ENCODE measurements at regions of chr1 and their contacts with region 1.

Region 1: GRCh38 chr1:204398217-204399081 is 13.2 kb downstream of the PPP1R15B start:
- DNase-seq: peak; percentile 82
- ATAC-seq: peak; percentile 99
- H3K4me3 ChIP-seq: no peak overlapping the region
- H3K27ac ChIP-seq: no peak overlapping the region; the same call in 1 of the 2 replicates
- H3K4me1 ChIP-seq: peaks cover 0 to 6% of the 10 kb centered on the region in 2 experiments; a peak in 2 of 4 replicates
- H3K27me3 ChIP-seq: no peaks in the 10 kb centered on the region
- CTCF ChIP-seq: peak; percentile 86 to 93 (median 87)
- POLR2A ChIP-seq: no peak
- RAD21 ChIP-seq: peak; percentile 81

Region 2: GRCh38 chr1:204162231-204163074 is 236.0 kb before region 1 on chr1:
- CTCF ChIA-PET with region 1: interaction called, 31 read pairs
- POLR2A ChIA-PET with region 1: no interaction called
- RAD21 ChIA-PET with region 1: interaction called, 3 to 5 read pairs
- intact Hi-C with region 1: loop called (anchors 1 kb)
- DNase-seq: peak; percentile 70
- ATAC-seq: peak; percentile 98
- H3K4me3 ChIP-seq: no peak overlapping the region
- H3K27ac ChIP-seq: no peak overlapping the region
- H3K4me1 ChIP-seq: peaks cover 0 to 15% of the 10 kb centered on the region in 2 experiments; a peak in 2 of 4 replicates
- H3K27me3 ChIP-seq: no peaks in the 10 kb centered on the region
- CTCF ChIP-seq: peak; percentile 98 to 99 (median 99)
- POLR2A ChIP-seq: no peak
- RAD21 ChIP-seq: peak; percentile 100

Region 3: GRCh38 chr1:204257954-204258752 is 140.3 kb before region 1 on chr1:
- CTCF ChIA-PET with region 1: interaction called, 15 read pairs
- POLR2A ChIA-PET with region 1: no interaction called
- RAD21 ChIA-PET with region 1: no interaction called
- intact Hi-C with region 1: no loop called
- DNase-seq: peak; percentile 37
- ATAC-seq: peak; percentile 97
- H3K4me3 ChIP-seq: no peak overlapping the region
- H3K27ac ChIP-seq: no peak overlapping the region
- H3K4me1 ChIP-seq: no peaks in the 10 kb centered on the region
- H3K27me3 ChIP-seq: no peaks in the 10 kb centered on the region
- CTCF ChIP-seq: peak; percentile 85 to 93 (median 91)
- POLR2A ChIP-seq: no peak
- RAD21 ChIP-seq: peak; percentile 88

Region 4: GRCh38 chr1:204377795-204378608 is 20.4 kb before region 1 on chr1:
- CTCF ChIA-PET with region 1: interaction called, 16 read pairs
- POLR2A ChIA-PET with region 1: interaction called, 6 read pairs
- RAD21 ChIA-PET with region 1: interaction called, 3 read pairs
- intact Hi-C with region 1: no loop called
- DNase-seq: no peak
- ATAC-seq: peak; percentile 78
- H3K4me3 ChIP-seq: peak overlapping the region; percentile 62 to 70
- H3K27ac ChIP-seq: peak overlapping the region; percentile 63
- H3K4me1 ChIP-seq: peaks cover 16 to 30% of the 10 kb centered on the region in 2 experiments
- H3K27me3 ChIP-seq: no peaks in the 10 kb centered on the region
- CTCF ChIP-seq: no peak
- POLR2A ChIP-seq: no peak
- RAD21 ChIP-seq: no peak

Region 5: GRCh38 chr1:204411451-204412204 is 13.2 kb after region 1 on chr1 and contains the start of gene PPP1R15B:
- CTCF ChIA-PET with region 1: interaction called, 25 read pairs
- POLR2A ChIA-PET with region 1: interaction called, 9 read pairs
- RAD21 ChIA-PET with region 1: no interaction called
- intact Hi-C with region 1: no loop called
- DNase-seq: peak; percentile 96
- ATAC-seq: peak; percentile 94
- H3K4me3 ChIP-seq: peak within 1 kb of the TSS; percentile 74 to 95
- H3K27ac ChIP-seq: peak within 1 kb of the TSS; percentile 93
- H3K4me1 ChIP-seq: peaks cover 30 to 44% of the 10 kb centered on the region in 2 experiments
- H3K27me3 ChIP-seq: no peaks in the 10 kb centered on the region
- CTCF ChIP-seq: no peak
- POLR2A ChIP-seq: peak; percentile 66
- RAD21 ChIP-seq: no peak
- total RNA-seq, gene PPP1R15B: 69.3 TPM

Region 6: DNA sequence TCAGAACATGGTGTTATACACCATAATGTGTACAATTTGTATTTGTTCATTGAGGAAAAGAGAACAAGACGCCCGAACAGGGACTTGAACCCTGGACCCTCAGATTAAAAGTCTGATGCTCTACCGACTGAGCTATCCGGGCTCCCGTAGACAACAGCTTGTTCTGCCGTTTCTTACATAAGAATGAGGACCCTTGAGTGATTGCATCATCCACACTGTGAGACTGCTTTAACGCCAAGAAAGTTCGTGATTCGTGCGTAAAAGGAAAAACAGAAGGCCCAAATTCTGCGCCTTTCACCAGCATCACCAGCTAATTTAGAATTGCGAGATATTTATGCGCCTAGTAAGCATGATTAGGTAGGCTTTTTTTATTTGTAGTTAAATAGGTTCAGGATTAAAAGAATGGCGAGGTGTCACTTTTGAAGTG is 108.5 kb after region 1 on chr1:
- CTCF ChIA-PET with region 1: interaction called, 12 read pairs
- POLR2A ChIA-PET with region 1: interaction called, 4 read pairs
- RAD21 ChIA-PET with region 1: no interaction called
- intact Hi-C with region 1: no loop called
- DNase-seq: peak; percentile 87
- ATAC-seq: peak; percentile 82
- H3K4me3 ChIP-seq: peak overlapping the region; percentile 7 to 38; a peak in 3 of 4 replicates
- H3K27ac ChIP-seq: peak overlapping the region; percentile 60
- H3K4me1 ChIP-seq: peaks cover 30 to 47% of the 10 kb centered on the region in 2 experiments
- H3K27me3 ChIP-seq: no peaks in the 10 kb centered on the region
- CTCF ChIP-seq: no peak
- POLR2A ChIP-seq: no peak
- RAD21 ChIP-seq: no peak

Region 7: GRCh38 chr1:205122489-205122882 is 724.0 kb after region 1 on chr1:
- CTCF ChIA-PET with region 1: no interaction called
- POLR2A ChIA-PET with region 1: no interaction called
- RAD21 ChIA-PET with region 1: no interaction called
- intact Hi-C with region 1: no loop called
- DNase-seq: no peak
- ATAC-seq: peak; percentile 35
- H3K4me3 ChIP-seq: peak overlapping the region; percentile 90 to 98
- H3K27ac ChIP-seq: peak overlapping the region; percentile 70; the same call in 1 of the 2 replicates
- H3K4me1 ChIP-seq: peaks cover 7 to 22% of the 10 kb centered on the region in 2 experiments; a peak in 3 of 4 replicates
- H3K27me3 ChIP-seq: no peaks in the 10 kb centered on the region
- CTCF ChIP-seq: no peak
- POLR2A ChIP-seq: no peak
- RAD21 ChIP-seq: no peak

Measured in HCT116 (cell line).